WTC11 (cell line): ENCODE measurements at regions of chr7 and their contacts with region 1.

Region 1: GRCh38 chr7:98745722-98746318 is 124.0 kb downstream of the TMEM130 start:
- DNase-seq: peak; percentile 91
- ATAC-seq: peak; percentile 80
- H3K4me3 Mint-ChIP-seq: no peak overlapping the region
- H3K27ac Mint-ChIP-seq: no peak overlapping the region
- H3K4me1 Mint-ChIP-seq: no peaks in the 10 kb centered on the region
- H3K27me3 Mint-ChIP-seq: no peaks in the 10 kb centered on the region; the same call in 1 of the 2 replicates
- CTCF ChIP-seq: peak; percentile 93

Region 2: GRCh38 chr7:98420966-98421612 is 324.7 kb before region 1 on chr7:
- CTCF ChIA-PET with region 1: interaction called, 25 read pairs
- POLR2A ChIA-PET with region 1: no interaction called
- DNase-seq: peak; percentile 93
- ATAC-seq: peak; percentile 99
- H3K4me3 Mint-ChIP-seq: no peak overlapping the region
- H3K27ac Mint-ChIP-seq: no peak overlapping the region
- H3K4me1 Mint-ChIP-seq: no peaks in the 10 kb centered on the region
- H3K27me3 Mint-ChIP-seq: peaks cover 13% of the 10 kb centered on the region
- CTCF ChIP-seq: peak; percentile 92

Region 3: DNA sequence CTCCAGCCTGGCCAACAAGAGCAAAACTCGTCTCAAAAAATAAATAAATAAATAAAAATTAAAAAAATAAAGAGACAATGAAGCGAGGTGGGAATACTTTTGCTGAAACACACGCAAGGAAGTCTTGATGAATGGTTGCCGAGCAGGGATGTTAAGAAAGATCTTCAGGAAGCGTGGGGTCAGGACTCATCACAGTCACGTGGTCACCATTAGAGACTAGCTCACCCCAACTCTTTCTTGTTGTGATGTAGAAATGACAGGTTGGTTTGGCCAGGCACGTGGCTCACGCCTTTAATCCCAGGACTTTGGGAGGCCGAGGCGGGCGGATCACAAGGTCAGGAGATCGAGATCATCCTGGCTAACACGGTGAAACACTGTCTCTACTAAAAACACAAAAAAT is 316.0 kb before region 1 on chr7:
- CTCF ChIA-PET with region 1: interaction called, 13 read pairs
- POLR2A ChIA-PET with region 1: no interaction called
- DNase-seq: no peak
- ATAC-seq: no peak
- H3K4me3 Mint-ChIP-seq: no peak overlapping the region
- H3K27ac Mint-ChIP-seq: no peak overlapping the region
- H3K4me1 Mint-ChIP-seq: 0 out of 2 replicates have a peak, but pooled peaks cover 2% of the 10 kb centered on the region
- H3K27me3 Mint-ChIP-seq: no peaks in the 10 kb centered on the region; the same call in 1 of the 2 replicates
- CTCF ChIP-seq: no peak

Region 4: DNA sequence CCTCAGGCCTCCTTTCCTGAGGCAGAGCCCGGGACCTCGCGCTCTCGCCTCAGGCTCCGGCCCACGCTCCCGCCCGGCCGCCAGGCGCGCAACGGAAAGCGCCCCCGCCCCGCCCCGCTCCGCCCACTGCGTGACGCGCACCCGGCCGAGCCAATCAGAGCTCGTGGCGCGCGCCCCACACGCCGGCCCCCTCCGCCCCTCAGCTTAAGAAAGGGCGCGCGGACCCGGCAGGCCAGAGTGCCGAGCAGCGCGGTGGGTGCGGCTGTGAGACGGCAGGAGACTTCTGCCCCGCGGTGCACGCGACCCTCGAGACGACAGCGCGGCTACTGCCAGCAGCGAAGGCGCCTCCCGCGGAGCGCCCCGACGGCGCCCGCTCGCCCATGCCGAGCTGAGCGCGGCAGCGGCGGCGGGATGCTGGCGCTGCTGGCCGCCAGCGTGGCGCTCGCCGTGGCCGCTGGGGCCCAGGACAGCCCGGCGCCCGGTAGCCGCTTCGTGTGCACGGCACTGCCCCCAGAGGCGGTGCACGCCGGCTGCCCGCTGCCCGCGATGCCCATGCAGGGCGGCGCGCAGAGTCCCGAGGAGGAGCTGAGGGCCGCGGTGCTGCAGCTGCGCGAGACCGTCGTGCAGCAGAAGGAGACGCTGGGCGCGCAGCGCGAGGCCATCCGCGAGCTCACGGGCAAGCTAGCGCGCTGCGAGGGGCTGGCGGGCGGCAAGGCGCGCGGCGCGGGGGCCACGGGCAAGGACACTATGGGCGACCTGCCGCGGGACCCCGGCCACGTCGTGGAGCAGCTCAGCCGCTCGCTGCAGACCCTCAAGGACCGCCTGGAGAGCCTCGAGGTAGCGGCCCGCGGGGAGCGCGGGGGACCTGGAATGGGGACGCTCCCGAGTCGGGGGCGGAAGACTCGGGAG is 128.5 kb before region 1 on chr7 and contains the start of gene NPTX2:
- CTCF ChIA-PET with region 1: interaction called, 16 read pairs
- POLR2A ChIA-PET with region 1: no interaction called
- DNase-seq: peak; percentile 83
- ATAC-seq: peak; percentile 82
- H3K4me3 Mint-ChIP-seq: peak within 1 kb of the TSS; percentile 80
- H3K27ac Mint-ChIP-seq: no peak within 1 kb of the TSS
- H3K4me1 Mint-ChIP-seq: peaks cover 18% of the 10 kb centered on the region
- H3K27me3 Mint-ChIP-seq: peaks cover 75% of the 10 kb centered on the region
- CTCF ChIP-seq: no peak
- total RNA-seq, gene NPTX2: 10.9 to 17.0 TPM (median 15.9 TPM) in 3 replicates

Region 5: GRCh38 chr7:98729121-98729520 is 16.7 kb before region 1 on chr7:
- CTCF ChIA-PET with region 1: interaction called, 16 read pairs
- POLR2A ChIA-PET with region 1: no interaction called
- DNase-seq: no peak
- ATAC-seq: no peak
- H3K4me3 Mint-ChIP-seq: no peak overlapping the region
- H3K27ac Mint-ChIP-seq: no peak overlapping the region
- H3K4me1 Mint-ChIP-seq: peaks cover 34% of the 10 kb centered on the region
- H3K27me3 Mint-ChIP-seq: no peaks in the 10 kb centered on the region
- CTCF ChIP-seq: no peak

Region 6: GRCh38 chr7:98735801-98736200 is 10.0 kb before region 1 on chr7:
- CTCF ChIA-PET with region 1: interaction called, 16 read pairs
- POLR2A ChIA-PET with region 1: no interaction called
- DNase-seq: no peak
- ATAC-seq: no peak
- H3K4me3 Mint-ChIP-seq: no peak overlapping the region
- H3K27ac Mint-ChIP-seq: no peak overlapping the region
- H3K4me1 Mint-ChIP-seq: no peaks in the 10 kb centered on the region
- H3K27me3 Mint-ChIP-seq: no peaks in the 10 kb centered on the region
- CTCF ChIP-seq: no peak

Region 7: GRCh38 chr7:98771519-98771918 is 25.7 kb after region 1 on chr7:
- CTCF ChIA-PET with region 1: interaction called, 25 read pairs
- POLR2A ChIA-PET with region 1: interaction called, 3 read pairs
- DNase-seq: peak; percentile 25
- ATAC-seq: peak; percentile 71
- H3K4me3 Mint-ChIP-seq: peak overlapping the region; percentile 60
- H3K27ac Mint-ChIP-seq: peak overlapping the region; percentile 76
- H3K4me1 Mint-ChIP-seq: peaks cover 38% of the 10 kb centered on the region
- H3K27me3 Mint-ChIP-seq: peaks cover 8% of the 10 kb centered on the region
- CTCF ChIP-seq: no peak

Region 8: GRCh38 chr7:98963305-98963704 is 217.5 kb after region 1 on chr7:
- CTCF ChIA-PET with region 1: no interaction called
- POLR2A ChIA-PET with region 1: no interaction called
- DNase-seq: no peak
- ATAC-seq: no peak
- H3K4me3 Mint-ChIP-seq: no peak overlapping the region
- H3K27ac Mint-ChIP-seq: no peak overlapping the region
- H3K4me1 Mint-ChIP-seq: no peaks in the 10 kb centered on the region
- H3K27me3 Mint-ChIP-seq: no peaks in the 10 kb centered on the region
- CTCF ChIP-seq: no peak